Mammary epithelial cell (primary cell): ENCODE measurements at regions of chr5 and their contacts with region 1.

Region 1: GRCh38 chr5:87412630-87413342 is at the start of gene CCNH:
- DNase-seq: peak; percentile 96
- H3K4me3 ChIP-seq: peak within 1 kb of the TSS; percentile 72 to 96 (median 88)
- H3K27ac ChIP-seq: peak within 1 kb of the TSS; percentile 91
- H3K4me1 ChIP-seq: peaks cover 10% of the 10 kb centered on the region
- H3K27me3 ChIP-seq: no peaks in the 10 kb centered on the region
- CTCF ChIP-seq: no peak
- total RNA-seq, gene CCNH: 47.6 to 76.2 TPM

Region 2: GRCh38 chr5:87195104-87195591 is 217.6 kb before region 1 on chr5:
- CTCF ChIA-PET with region 1: no interaction called
- dilution Hi-C with region 1: no loop called
- in situ Hi-C with region 1: no loop called
- intact Hi-C with region 1: no loop called
- DNase-seq: peak; percentile 53
- H3K4me3 ChIP-seq: peak overlapping the region in 1 of 3 experiments; percentile 12
- H3K27ac ChIP-seq: peak overlapping the region; percentile 27
- H3K4me1 ChIP-seq: peaks cover 26% of the 10 kb centered on the region
- H3K27me3 ChIP-seq: no peaks in the 10 kb centered on the region
- CTCF ChIP-seq: no peak

Region 3: DNA sequence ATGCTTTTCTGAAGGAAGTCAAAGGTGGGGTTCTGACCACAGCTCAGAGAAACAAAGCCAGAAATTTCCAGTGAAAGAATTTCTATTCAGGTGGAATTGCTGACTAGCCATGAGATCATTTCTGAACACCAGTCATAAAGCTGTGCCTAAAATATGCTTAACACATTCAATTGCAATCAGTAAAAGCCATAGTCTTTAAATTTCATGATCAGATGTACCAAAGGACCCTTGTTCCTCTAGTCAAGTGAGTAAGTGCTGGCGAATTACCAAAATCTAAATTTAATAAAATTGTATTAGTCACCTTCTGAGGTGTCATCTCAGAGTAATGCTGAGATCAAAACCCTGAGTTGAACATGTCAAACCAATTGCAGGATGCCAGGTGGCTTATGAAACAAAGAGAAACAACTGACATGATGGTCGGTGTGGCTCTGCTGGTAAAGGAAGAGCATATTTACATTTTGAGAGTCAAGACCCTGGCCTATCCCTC is 334.1 kb after region 1 on chr5:
- CTCF ChIA-PET with region 1: no interaction called
- dilution Hi-C with region 1: no loop called
- in situ Hi-C with region 1: loop called in 1 of 2 experiments (anchors 25 kb)
- intact Hi-C with region 1: loop called (anchors 5 kb)
- DNase-seq: peak; percentile 97
- H3K4me3 ChIP-seq: no peak overlapping the region
- H3K27ac ChIP-seq: peak overlapping the region; percentile 95
- H3K4me1 ChIP-seq: peaks cover 34% of the 10 kb centered on the region
- H3K27me3 ChIP-seq: no peaks in the 10 kb centered on the region
- CTCF ChIP-seq: no peak

Region 4: GRCh38 chr5:87770601-87771121 is 357.9 kb after region 1 on chr5:
- CTCF ChIA-PET with region 1: no interaction called
- dilution Hi-C with region 1: no loop called
- in situ Hi-C with region 1: loop called in 1 of 2 experiments (anchors 25 kb)
- intact Hi-C with region 1: no loop called
- DNase-seq: no peak
- H3K4me3 ChIP-seq: no peak overlapping the region
- H3K27ac ChIP-seq: no peak overlapping the region
- H3K4me1 ChIP-seq: peaks cover 6% of the 10 kb centered on the region
- H3K27me3 ChIP-seq: no peaks in the 10 kb centered on the region
- CTCF ChIP-seq: no peak